ENCODE measurements at regions of chr2 and their contacts with region 1.

Region 1: DNA sequence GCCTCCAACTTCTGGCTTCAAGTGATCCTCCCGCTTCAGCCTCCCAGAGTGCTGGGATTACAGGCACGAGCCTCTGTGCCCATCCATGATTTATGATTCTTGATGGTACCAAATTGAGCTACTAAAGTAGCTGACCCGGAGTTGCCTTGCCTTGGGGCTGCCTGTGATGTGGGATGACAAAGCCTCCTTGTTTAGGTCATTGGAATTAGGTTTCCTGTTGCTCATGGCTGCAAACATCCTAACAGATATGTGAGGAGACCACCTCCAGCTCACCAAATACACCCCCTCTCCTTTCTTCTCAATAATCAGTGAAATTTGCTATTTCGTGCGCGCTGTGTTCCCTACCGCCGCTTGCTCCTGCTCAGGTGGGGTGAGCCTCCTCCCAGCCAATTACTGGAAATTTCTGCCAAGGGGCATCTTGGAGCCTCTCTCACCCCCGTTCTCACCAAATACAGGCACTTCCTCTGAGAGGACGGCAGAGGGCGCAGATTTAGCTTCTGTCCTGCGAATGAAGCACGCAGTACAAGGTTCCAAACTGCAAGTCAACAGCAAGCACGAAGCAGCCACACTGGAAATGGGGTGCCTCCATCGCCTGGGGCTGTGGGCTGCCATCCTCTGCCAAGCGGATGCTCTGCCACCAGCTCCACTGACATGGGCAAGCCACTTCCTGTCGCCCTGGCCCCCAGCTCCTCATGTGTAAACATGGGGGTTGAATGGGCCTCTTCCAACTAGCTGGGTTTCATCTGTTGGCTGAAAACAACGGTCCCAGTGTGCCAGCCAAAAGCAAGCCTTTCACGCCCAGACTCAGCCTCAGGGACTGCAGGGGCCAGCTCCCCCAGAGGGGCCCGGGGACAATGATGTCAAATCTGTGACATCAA is 71.7 kb downstream of the NCAPH start:
- DNase-seq: no peak
- H3K4me3 ChIP-seq: no peak overlapping the region
- H3K27ac ChIP-seq: no peak overlapping the region
- H3K4me1 ChIP-seq: peaks cover 0 to 36% (median 4%) of the 10 kb centered on the region in 3 donors
- H3K27me3 ChIP-seq: peaks cover 0 to 25% (median 0%) of the 10 kb centered on the region in 4 donors
- CTCF ChIP-seq: peak; percentile 52 to 84 (median 76)
- POLR2A ChIP-seq: no peak

Region 2: DNA sequence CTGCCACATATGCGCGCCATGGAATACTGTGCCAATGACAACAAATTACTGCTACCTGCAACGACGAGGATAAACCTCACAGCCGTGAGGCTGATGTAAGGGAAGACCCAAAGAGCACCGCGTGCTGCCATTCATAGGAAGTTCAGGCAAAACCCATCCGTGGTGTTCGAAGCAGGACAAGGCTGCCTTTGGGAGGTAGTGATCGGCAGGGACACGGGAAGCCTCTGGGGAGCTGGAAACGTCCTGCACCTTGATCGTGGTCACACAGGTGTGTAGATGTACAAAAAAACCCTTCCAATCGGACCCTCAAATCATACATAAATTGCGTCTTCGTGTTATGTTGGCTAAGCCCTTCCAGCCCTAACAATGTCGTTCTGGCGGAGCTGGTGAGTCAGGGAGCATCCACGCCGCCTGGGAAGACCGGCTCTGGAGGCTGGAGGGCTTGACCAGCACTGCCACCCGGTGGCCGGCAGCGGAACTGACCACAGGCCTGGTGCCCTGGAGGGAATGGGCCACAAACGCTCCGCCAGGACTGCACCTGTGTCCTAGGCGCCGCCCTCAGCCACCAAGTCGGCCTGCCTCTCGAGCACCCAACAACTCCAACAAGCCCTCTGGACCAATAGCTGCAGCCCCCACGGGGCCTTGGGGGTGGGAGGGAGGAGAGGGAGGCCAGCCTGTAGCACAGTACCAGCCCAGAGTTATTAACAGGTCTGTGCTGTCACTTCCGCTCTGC is 102.0 kb after region 1 on chr2:
- intact Hi-C with region 1: loop called (anchors 5 kb)
- DNase-seq: no peak
- H3K4me3 ChIP-seq: no peak overlapping the region
- H3K27ac ChIP-seq: no peak overlapping the region
- H3K4me1 ChIP-seq: peaks cover 12 to 31% (median 14%) of the 10 kb centered on the region in 3 donors
- H3K27me3 ChIP-seq: peaks cover 0 to 43% (median 0%) of the 10 kb centered on the region in 4 donors
- CTCF ChIP-seq: peak; percentile 85 to 98 (median 98)
- POLR2A ChIP-seq: peak in 1 of 4 donors; percentile 5

Measured in esophagus squamous epithelium (tissue), 5 donors.